CD4-positive, alpha-beta T cell (primary cell): ENCODE measurements at regions of chr20 and their contacts with region 1.

Region 1: GRCh38 chr20:35699127-35699975 is at the starts of genes NFS1 and ROMO1:
- DNase-seq: peak; percentile 77 to 94 (median 82)
- ATAC-seq: peak; percentile 89
- H3K4me3 ChIP-seq: peak within 1 kb of the TSS; percentile 95
- H3K4me3 Mint-ChIP-seq: peak within 1 kb of the TSS; percentile 95
- H3K27ac ChIP-seq: peak within 1 kb of the TSS; percentile 93 to 97
- H3K27ac Mint-ChIP-seq: peak within 1 kb of the TSS; percentile 84
- H3K4me1 ChIP-seq: peaks cover 23% of the 10 kb centered on the region
- H3K4me1 Mint-ChIP-seq: peaks cover 52% of the 10 kb centered on the region
- H3K27me3 ChIP-seq: no peaks in the 10 kb centered on the region
- H3K27me3 Mint-ChIP-seq: no peaks in the 10 kb centered on the region
- CTCF ChIP-seq: peak; percentile 11
- total RNA-seq, gene NFS1: 10.6 to 11.5 TPM
- total RNA-seq, gene ROMO1: 32.9 to 35.8 TPM

Region 2: GRCh38 chr20:35463455-35464300 is 235.7 kb before region 1 on chr20:
- CTCF ChIA-PET with region 1: no interaction called
- POLR2A ChIA-PET with region 1: no interaction called
- intact Hi-C with region 1: loop called (anchors 5 to 10 kb)
- DNase-seq: peak; percentile 14 to 80 (median 44)
- ATAC-seq: peak; percentile 97
- H3K4me3 ChIP-seq: no peak overlapping the region
- H3K4me3 Mint-ChIP-seq: no peak overlapping the region
- H3K27ac ChIP-seq: no peak overlapping the region
- H3K27ac Mint-ChIP-seq: peak overlapping the region; percentile 16
- H3K4me1 ChIP-seq: peaks cover 6% of the 10 kb centered on the region
- H3K4me1 Mint-ChIP-seq: peaks cover 7% of the 10 kb centered on the region
- H3K27me3 ChIP-seq: no peaks in the 10 kb centered on the region
- H3K27me3 Mint-ChIP-seq: no peaks in the 10 kb centered on the region
- CTCF ChIP-seq: peak; percentile 81

Region 3: DNA sequence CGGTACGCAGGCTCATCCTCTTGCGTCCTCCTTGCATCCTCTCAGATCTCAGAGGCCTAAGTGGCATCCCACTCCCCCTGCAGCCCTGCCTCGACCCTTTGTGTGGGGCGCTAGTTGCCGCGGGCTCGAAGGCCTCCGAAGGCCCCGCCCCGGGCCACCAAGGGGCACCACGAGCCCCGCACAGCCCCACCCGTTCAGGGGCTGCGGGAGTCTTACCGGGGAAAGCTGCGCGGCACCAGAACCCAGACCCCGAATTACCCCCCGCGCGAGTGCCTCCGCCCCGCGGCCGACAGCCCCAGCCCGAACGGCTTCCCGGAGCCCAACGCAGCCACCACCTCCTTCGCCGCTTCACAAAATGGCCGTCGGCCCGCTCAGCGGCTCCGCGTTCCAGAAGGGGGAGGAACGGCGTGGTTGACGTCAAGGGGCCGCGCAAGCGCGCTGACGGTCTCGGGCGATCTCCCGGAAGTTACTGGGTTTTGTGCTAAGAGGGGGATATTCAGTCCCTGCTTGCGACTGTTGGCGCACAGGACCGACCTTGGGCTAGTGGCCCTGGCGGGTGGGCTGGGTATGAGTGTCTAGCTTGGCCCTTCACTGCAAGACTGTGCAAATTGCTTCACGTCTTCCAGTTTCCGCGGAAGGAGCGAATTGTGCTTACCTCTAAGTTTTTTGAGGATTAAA is 34.7 kb before region 1 on chr20 and contains the starts of genes CPNE1 and RBM12:
- CTCF ChIA-PET with region 1: interaction called, 4 read pairs
- POLR2A ChIA-PET with region 1: interaction called, 21 read pairs
- intact Hi-C with region 1: loop called (anchors 2 kb)
- DNase-seq: peak; percentile 87 to 97 (median 92)
- ATAC-seq: peak; percentile 67
- H3K4me3 ChIP-seq: peak within 1 kb of the TSS; percentile 97
- H3K4me3 Mint-ChIP-seq: peak within 1 kb of the TSS; percentile 89
- H3K27ac ChIP-seq: peak within 1 kb of the TSS; percentile 99
- H3K27ac Mint-ChIP-seq: peak within 1 kb of the TSS; percentile 99
- H3K4me1 ChIP-seq: peaks cover 37% of the 10 kb centered on the region
- H3K4me1 Mint-ChIP-seq: peaks cover 49% of the 10 kb centered on the region
- H3K27me3 ChIP-seq: no peaks in the 10 kb centered on the region
- H3K27me3 Mint-ChIP-seq: no peaks in the 10 kb centered on the region
- CTCF ChIP-seq: no peak
- total RNA-seq, gene CPNE1: 146 to 153 TPM
- total RNA-seq, gene RBM12: 91.7 to 95.2 TPM

Region 4: GRCh38 chr20:35718972-35719635 is 19.8 kb after region 1 on chr20:
- CTCF ChIA-PET with region 1: interaction called, 4 read pairs
- POLR2A ChIA-PET with region 1: interaction called, 10 read pairs
- intact Hi-C with region 1: no loop called
- DNase-seq: no peak
- ATAC-seq: no peak
- H3K4me3 ChIP-seq: no peak overlapping the region
- H3K4me3 Mint-ChIP-seq: no peak overlapping the region
- H3K27ac ChIP-seq: no peak overlapping the region
- H3K27ac Mint-ChIP-seq: peak overlapping the region; percentile 27
- H3K4me1 ChIP-seq: peaks cover 53% of the 10 kb centered on the region
- H3K4me1 Mint-ChIP-seq: peaks cover 51% of the 10 kb centered on the region
- H3K27me3 ChIP-seq: no peaks in the 10 kb centered on the region
- H3K27me3 Mint-ChIP-seq: no peaks in the 10 kb centered on the region
- CTCF ChIP-seq: no peak

Region 5: DNA sequence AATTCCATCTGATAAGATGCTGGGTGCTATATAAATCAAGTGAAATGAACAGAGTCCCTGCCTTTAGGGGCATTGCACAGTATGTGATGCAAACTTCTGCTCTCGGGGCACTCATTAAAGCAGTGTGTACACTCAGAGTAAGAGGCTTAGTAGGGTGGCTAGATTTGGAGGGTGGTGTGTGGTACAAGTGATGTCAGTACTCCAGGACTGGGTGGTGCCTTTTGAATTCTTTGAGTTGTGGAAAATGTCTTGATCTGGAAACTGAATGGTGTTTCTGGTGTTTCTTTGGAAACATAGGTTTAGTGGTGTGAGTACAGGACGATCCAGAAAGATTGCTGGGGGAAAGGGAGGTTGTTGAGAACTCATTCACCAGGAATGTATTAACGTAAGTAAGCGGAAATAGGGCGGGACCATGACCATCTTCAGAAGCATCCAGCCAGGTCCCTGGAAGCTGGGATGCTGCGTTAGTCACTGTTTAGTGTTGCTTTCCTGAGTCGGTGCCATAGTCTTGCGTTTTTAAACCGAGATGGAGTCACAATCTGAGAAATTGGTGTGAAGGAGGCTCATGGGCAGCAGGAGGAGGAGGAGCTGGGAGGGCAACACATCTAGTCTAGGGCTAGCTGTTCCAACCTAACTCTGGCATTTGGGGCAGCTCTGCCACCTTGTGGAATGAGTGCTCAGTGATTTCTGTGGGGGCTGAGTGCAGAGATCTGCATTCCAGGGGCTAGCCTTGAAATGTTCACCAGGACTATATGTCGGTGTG is 184.6 kb after region 1 on chr20:
- CTCF ChIA-PET with region 1: interaction called, 3 read pairs
- POLR2A ChIA-PET with region 1: interaction called, 9 read pairs
- intact Hi-C with region 1: loop called (anchors 5 kb)
- DNase-seq: peak; percentile 35 to 75 (median 52)
- ATAC-seq: peak; percentile 91
- H3K4me3 ChIP-seq: no peak overlapping the region
- H3K4me3 Mint-ChIP-seq: no peak overlapping the region
- H3K27ac ChIP-seq: no peak overlapping the region
- H3K27ac Mint-ChIP-seq: peak overlapping the region; percentile 43
- H3K4me1 ChIP-seq: peaks cover 5% of the 10 kb centered on the region
- H3K4me1 Mint-ChIP-seq: peaks cover 16% of the 10 kb centered on the region
- H3K27me3 ChIP-seq: no peaks in the 10 kb centered on the region
- H3K27me3 Mint-ChIP-seq: no peaks in the 10 kb centered on the region
- CTCF ChIP-seq: peak; percentile 77